Endothelial cell of umbilical vein (primary cell): ENCODE measurements at regions of chr7 and their contacts with region 1.

Region 1: GRCh38 chr7:93231799-93232672 is at the start of gene VPS50:
- DNase-seq: peak; percentile 99
- H3K4me3 ChIP-seq: peak within 1 kb of the TSS; percentile 82 to 91 (median 90)
- H3K27ac ChIP-seq: peak within 1 kb of the TSS; percentile 16
- H3K4me1 ChIP-seq: peaks cover 14% of the 10 kb centered on the region
- H3K27me3 ChIP-seq: peaks cover 0 to 8% of the 10 kb centered on the region in 2 experiments
- CTCF ChIP-seq: no peak
- POLR2A ChIP-seq: peak; percentile 35
- total RNA-seq, gene VPS50: 23.9 and 25.6 TPM in 2 replicates

Region 2: DNA sequence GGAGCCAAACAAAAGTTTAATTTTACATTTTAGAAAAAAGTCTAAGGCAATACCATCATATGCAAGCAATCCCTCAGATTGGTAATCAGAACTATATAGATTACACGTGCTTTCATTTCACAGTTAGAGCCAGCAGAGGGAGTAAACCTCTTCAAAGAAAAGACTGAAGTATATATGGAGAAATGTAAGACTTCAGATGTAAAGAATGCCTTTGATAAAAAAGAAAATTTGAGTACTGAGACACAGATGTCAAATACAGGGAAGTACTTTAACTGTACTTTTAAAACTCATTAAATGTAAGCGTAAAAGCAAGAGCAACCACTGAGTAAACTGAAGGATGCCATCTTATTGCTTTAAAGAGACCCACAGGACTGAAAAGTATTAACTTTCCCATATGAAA is 540.5 kb before region 1 on chr7:
- CTCF ChIA-PET with region 1: no interaction called
- POLR2A ChIA-PET with region 1: no interaction called
- dilution Hi-C with region 1: no loop called
- intact Hi-C with region 1: loop called (anchors 2 kb)
- DNase-seq: peak; percentile 77
- H3K4me3 ChIP-seq: no peak overlapping the region
- H3K27ac ChIP-seq: peak overlapping the region; percentile 19
- H3K4me1 ChIP-seq: peaks cover 18% of the 10 kb centered on the region
- H3K27me3 ChIP-seq: no peaks in the 10 kb centered on the region
- CTCF ChIP-seq: peak; percentile 32 to 34
- POLR2A ChIP-seq: no peak

Region 3: DNA sequence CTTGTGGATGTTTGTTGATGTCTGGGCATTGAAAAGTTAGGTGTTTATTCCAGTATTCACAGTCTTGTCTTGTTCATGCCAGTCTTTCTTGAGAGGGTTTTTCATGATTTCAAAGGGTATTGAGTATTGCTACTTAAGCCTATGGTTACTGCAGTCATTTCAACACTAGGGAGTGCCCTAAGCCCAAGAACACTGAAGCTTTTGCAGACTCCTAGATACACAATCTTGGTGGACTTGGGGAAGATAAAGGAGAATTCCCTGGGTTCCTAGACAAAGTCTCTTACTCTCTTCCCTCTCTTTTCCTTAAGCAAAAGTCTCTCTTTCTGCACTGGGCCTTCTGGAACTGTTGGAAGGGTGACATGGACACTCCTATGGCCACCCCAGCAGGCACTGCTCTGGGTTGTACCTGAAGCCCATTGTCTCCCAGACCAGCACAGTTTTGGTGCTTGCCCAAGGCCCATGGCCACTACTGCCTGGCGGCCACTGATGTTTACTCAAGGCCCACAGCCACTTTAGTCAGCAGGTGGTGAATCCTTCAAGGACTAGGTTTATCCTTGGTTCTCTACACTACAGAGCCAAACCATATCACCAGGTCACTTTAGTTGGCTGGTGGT is 139.2 kb before region 1 on chr7:
- CTCF ChIA-PET with region 1: interaction called, 73 read pairs
- POLR2A ChIA-PET with region 1: no interaction called
- dilution Hi-C with region 1: no loop called
- intact Hi-C with region 1: loop called (anchors 1 kb)
- DNase-seq: peak; percentile 56
- H3K4me3 ChIP-seq: no peak overlapping the region
- H3K27ac ChIP-seq: no peak overlapping the region
- H3K4me1 ChIP-seq: no peaks in the 10 kb centered on the region
- H3K27me3 ChIP-seq: peaks cover 11 to 19% of the 10 kb centered on the region in 2 experiments
- CTCF ChIP-seq: peak; percentile 23 to 42
- POLR2A ChIP-seq: no peak

Region 4: DNA sequence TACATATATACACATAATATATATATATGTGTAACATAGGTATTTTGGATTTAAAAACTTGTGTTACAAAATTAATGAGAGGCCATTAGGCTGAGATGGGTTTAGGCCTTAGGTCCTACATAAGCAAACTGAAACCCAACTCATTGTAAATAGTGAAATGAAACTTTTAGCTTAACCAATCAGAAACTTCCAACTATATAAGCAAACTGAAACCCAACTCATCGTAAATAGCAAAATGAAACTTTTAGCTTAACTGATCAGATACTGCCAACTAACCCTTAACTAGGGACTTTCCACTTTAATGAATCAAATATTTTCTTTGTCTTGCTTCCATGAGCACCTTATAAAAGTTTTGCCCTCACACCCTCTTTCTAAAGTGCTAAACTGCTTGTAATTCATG is 66.6 kb before region 1 on chr7:
- CTCF ChIA-PET with region 1: no interaction called
- POLR2A ChIA-PET with region 1: no interaction called
- dilution Hi-C with region 1: no loop called
- intact Hi-C with region 1: no loop called
- DNase-seq: no peak
- H3K4me3 ChIP-seq: no peak overlapping the region
- H3K27ac ChIP-seq: no peak overlapping the region
- H3K4me1 ChIP-seq: no peaks in the 10 kb centered on the region
- H3K27me3 ChIP-seq: peaks cover 0 to 5% of the 10 kb centered on the region in 2 experiments
- CTCF ChIP-seq: no peak
- POLR2A ChIP-seq: no peak

Region 5: DNA sequence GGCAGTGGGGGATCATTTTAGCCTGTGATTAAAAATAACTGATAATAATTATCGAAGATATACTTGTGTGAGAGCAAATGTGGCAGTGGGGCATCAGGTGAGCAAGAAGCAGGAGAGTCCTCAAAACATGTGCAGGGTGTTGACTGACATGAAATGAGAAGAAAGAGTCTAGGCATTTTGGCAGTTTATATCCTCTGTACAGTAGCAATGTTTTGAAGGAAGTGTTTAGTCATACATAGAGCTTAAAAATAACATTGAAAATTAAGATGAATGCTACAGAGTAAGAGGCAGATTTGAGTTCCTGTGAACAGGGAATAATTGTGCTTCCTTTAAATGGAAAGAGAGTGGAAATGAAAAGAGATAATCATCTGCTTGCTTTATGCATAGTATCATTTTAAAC is 47.5 kb after region 1 on chr7:
- CTCF ChIA-PET with region 1: no interaction called
- POLR2A ChIA-PET with region 1: no interaction called
- dilution Hi-C with region 1: no loop called
- intact Hi-C with region 1: loop called (anchors 2 kb)
- DNase-seq: peak; percentile 85
- H3K4me3 ChIP-seq: no peak overlapping the region
- H3K27ac ChIP-seq: peak overlapping the region; percentile 0
- H3K4me1 ChIP-seq: peaks cover 16% of the 10 kb centered on the region
- H3K27me3 ChIP-seq: no peaks in the 10 kb centered on the region
- CTCF ChIP-seq: no peak
- POLR2A ChIP-seq: no peak